H1 (cell line): ENCODE measurements at regions of chr4 and their contacts with region 1.

Region 1: GRCh38 chr4:121370729-121371325 is 10.0 kb downstream of the QRFPR start:
- DNase-seq: no peak
- H3K4me3 ChIP-seq: no peak overlapping the region
- H3K27ac ChIP-seq: no peak overlapping the region
- H3K4me1 ChIP-seq: no peaks in the 10 kb centered on the region
- H3K27me3 ChIP-seq: no peaks in the 10 kb centered on the region
- CTCF ChIP-seq: peak in 2 of 3 experiments; percentile 25 to 43; a peak in 2 of 4 replicates
- EP300 ChIP-seq: no peak
- POLR2A ChIP-seq: no peak
- RAD21 ChIP-seq: peak; percentile 50 to 54

Region 2: DNA sequence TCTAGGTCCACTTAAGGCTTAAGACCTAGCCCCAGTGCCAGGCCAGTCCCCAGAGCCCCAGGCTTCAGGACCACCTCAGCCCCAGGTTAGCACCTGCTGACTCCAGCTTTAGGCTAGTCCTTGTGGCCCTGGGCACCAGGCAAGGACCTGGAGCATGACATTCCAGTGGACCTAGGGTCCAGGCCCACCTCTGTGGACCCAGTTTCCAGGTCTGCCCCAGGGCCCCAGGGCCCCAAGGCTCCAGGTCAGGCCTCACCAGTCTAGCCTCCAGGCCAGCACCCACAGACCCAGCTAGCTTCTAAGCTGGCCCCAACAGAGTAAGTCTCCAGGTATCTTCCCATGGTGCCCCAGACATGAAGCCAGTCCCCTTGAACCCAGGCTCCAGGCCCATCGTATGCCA is 87.5 kb before region 1 on chr4:
- CTCF ChIA-PET with region 1: no interaction called
- POLR2A ChIA-PET with region 1: no interaction called
- DNase-seq: no peak
- H3K4me3 ChIP-seq: no peak overlapping the region
- H3K27ac ChIP-seq: no peak overlapping the region
- H3K4me1 ChIP-seq: no peaks in the 10 kb centered on the region
- H3K27me3 ChIP-seq: no peaks in the 10 kb centered on the region
- CTCF ChIP-seq: no peak
- EP300 ChIP-seq: no peak
- POLR2A ChIP-seq: no peak
- RAD21 ChIP-seq: no peak

Region 3: DNA sequence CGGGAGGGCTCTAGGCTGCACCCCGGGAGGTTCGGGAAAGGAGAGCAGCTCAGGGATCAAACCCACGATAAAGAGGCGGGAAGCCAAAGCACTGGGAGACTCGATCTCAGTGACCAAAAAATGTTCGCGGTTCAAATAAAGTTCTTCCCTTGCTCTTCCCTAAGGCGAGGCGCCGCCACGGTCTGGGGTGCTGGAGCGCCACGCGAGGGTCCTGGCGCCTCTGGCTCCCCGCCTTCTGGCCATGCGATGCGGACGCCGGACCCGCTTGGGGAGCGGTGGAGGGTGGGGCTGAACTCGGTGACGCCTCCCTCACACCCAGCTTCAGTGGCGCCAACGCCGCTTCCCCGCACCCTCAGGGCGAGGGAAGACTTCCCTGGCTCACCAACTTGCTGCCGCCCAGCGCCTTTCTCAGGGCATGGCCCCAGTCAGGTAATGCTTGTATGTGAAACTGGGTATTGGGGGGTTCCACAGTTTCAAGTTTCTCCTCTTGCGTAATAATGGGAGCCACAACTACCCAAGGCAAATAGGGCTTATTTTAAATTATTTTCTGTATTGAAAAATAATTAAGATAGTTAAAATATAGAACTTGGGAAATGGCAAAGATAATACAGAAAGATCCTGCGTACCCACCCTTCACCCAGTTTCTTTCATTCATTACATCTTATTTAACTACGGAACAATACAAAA is 10.1 kb after region 1 on chr4 and contains the start of gene QRFPR:
- CTCF ChIA-PET with region 1: interaction called, 17 read pairs
- POLR2A ChIA-PET with region 1: no interaction called
- DNase-seq: peak; percentile 46 to 67
- H3K4me3 ChIP-seq: peak within 1 kb of the TSS; percentile 26 to 66 (median 57)
- H3K27ac ChIP-seq: no peak within 1 kb of the TSS
- H3K4me1 ChIP-seq: peaks cover 0 to 2% (median 0%) of the 10 kb centered on the region in 4 experiments; a peak in 3 of 7 replicates
- H3K27me3 ChIP-seq: peaks cover 8 to 35% (median 22%) of the 10 kb centered on the region in 4 experiments
- CTCF ChIP-seq: peak in 2 of 3 experiments; percentile 3 to 5; a peak in 1 of 4 replicates
- EP300 ChIP-seq: no peak
- POLR2A ChIP-seq: peak in 1 of 2 experiments; percentile 39; a peak in 1 of 3 replicates
- RAD21 ChIP-seq: peak; percentile 6 to 15; a peak in 2 of 4 replicates
- total RNA-seq, gene QRFPR: 0.88 and 1.0 TPM in 2 replicates

Region 4: GRCh38 chr4:121397941-121398601 is 27.2 kb after region 1 on chr4:
- CTCF ChIA-PET with region 1: interaction called, 11 read pairs
- POLR2A ChIA-PET with region 1: no interaction called
- DNase-seq: no peak
- H3K4me3 ChIP-seq: no peak overlapping the region
- H3K27ac ChIP-seq: no peak overlapping the region
- H3K4me1 ChIP-seq: no peaks in the 10 kb centered on the region
- H3K27me3 ChIP-seq: no peaks in the 10 kb centered on the region
- CTCF ChIP-seq: no peak
- EP300 ChIP-seq: no peak
- POLR2A ChIP-seq: no peak
- RAD21 ChIP-seq: no peak

Region 5: DNA sequence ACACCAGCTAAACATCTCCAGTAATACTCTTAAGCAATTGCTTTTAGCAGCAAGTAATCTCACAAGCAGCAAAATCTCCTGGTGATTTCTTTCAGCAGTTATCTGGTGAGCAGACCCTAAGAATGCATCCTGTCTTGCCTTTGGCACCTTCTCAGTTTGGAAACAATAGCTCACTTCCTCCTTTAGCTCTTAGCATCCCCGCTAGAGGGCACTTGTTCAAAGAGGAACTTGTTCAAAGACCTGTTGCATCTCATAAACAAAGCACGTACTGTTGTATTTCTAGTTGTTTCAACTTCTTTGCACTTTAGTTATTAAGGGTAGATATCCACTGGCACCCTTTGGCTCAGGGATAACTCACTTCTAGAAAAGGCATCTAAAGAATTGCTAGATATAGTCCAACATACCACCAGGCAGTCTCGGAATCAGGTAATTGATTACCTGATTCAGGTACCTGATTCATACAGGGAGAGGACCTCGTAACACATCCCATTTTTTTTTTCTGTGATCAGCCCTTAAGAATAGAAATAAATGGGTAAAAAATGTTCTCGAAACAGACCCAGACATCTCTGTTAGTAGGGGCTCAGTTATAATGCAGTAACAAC is 91.9 kb after region 1 on chr4:
- CTCF ChIA-PET with region 1: interaction called, 10 read pairs
- POLR2A ChIA-PET with region 1: no interaction called
- DNase-seq: no peak
- H3K4me3 ChIP-seq: no peak overlapping the region
- H3K27ac ChIP-seq: no peak overlapping the region
- H3K4me1 ChIP-seq: 0 out of 7 replicates have a peak, but pooled peaks cover 0 to 2% (median 0%) of the 10 kb centered on the region in 4 experiments
- H3K27me3 ChIP-seq: no peaks in the 10 kb centered on the region
- CTCF ChIP-seq: peak in 2 of 3 experiments; percentile 73 to 90; a peak in 3 of 4 replicates
- EP300 ChIP-seq: no peak
- POLR2A ChIP-seq: no peak
- RAD21 ChIP-seq: peak; percentile 63 to 66

Region 6: GRCh38 chr4:121597346-121597934 is 226.6 kb after region 1 on chr4:
- CTCF ChIA-PET with region 1: no interaction called
- POLR2A ChIA-PET with region 1: no interaction called
- DNase-seq: no peak
- H3K4me3 ChIP-seq: no peak overlapping the region
- H3K27ac ChIP-seq: no peak overlapping the region
- H3K4me1 ChIP-seq: no peaks in the 10 kb centered on the region
- H3K27me3 ChIP-seq: peaks cover 0 to 2% (median 0%) of the 10 kb centered on the region in 4 experiments; a peak in 1 of 7 replicates
- CTCF ChIP-seq: no peak
- EP300 ChIP-seq: no peak
- POLR2A ChIP-seq: no peak
- RAD21 ChIP-seq: no peak